Tibial artery (tissue), 4 donors: ENCODE measurements at regions of chr10 and their contacts with region 1.

Region 1: GRCh38 chr10:97731346-97732051 is 5.4 kb upstream of the ZFYVE27 start:
- DNase-seq: peak; percentile 72 to 84
- H3K4me3 ChIP-seq: no peak overlapping the region
- H3K27ac ChIP-seq: peak overlapping the region in 1 of 2 donors; percentile 7
- H3K4me1 ChIP-seq: peaks cover 0 to 16% (median 12%) of the 10 kb centered on the region in 4 donors
- H3K27me3 ChIP-seq: no peaks in the 10 kb centered on the region
- CTCF ChIP-seq: peak; percentile 81 to 95

Region 2: GRCh38 chr10:97407211-97407951 is 324.1 kb before region 1 on chr10:
- intact Hi-C with region 1: no loop called
- DNase-seq: no peak
- H3K4me3 ChIP-seq: no peak overlapping the region
- H3K27ac ChIP-seq: no peak overlapping the region
- H3K4me1 ChIP-seq: peaks cover 0 to 8% (median 5%) of the 10 kb centered on the region in 4 donors
- H3K27me3 ChIP-seq: no peaks in the 10 kb centered on the region
- CTCF ChIP-seq: peak; percentile 69 to 85

Region 3: DNA sequence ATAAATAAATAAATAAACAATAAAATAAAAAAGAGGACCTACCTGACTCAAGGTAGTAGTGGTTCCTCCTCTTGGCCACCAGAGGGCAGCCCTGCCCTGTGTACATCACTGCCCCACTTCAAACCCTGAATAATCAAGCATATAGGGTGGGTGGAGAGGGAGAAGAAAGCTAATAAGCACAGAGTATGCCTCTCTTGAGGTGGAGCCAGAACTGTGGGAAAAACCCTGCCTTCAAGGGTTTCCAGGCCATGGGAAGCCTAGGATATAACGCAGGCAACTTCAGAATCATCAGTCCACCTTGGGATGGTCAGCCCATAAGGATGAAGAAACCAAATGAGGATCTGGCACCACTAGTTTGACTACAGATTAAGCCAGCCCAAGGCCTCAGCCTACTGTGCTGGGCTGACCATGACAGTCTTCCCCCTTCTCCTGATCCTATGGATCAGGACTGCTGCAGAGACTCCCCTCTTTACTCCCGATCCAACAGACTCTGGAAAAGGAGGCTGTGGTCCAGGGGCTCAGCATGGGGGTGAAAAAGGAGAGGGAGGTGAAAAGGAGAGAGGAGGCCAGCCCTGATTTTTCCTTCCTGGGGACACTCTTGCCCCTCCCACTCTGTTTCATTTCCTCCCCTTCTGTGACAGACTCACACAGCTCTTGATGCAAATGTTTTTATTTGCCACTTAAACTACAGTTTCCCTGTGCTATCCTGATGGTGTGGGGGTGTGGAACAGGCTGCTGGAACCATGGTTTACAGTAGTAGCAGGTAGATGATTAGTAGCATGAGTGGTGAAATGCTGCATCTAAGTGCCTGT is 54.5 kb before region 1 on chr10:
- intact Hi-C with region 1: loop called (anchors 5 kb)
- DNase-seq: no peak
- H3K4me3 ChIP-seq: no peak overlapping the region
- H3K27ac ChIP-seq: peak overlapping the region in 1 of 2 donors; percentile 16
- H3K4me1 ChIP-seq: peaks cover 0 to 8% (median 2%) of the 10 kb centered on the region in 4 donors
- H3K27me3 ChIP-seq: no peaks in the 10 kb centered on the region
- CTCF ChIP-seq: peak; percentile 70 to 92

Region 4: GRCh38 chr10:97701438-97702069 is 29.9 kb before region 1 on chr10:
- intact Hi-C with region 1: loop called (anchors 5 kb)
- DNase-seq: peak in 1 of 2 donors; percentile 61
- H3K4me3 ChIP-seq: no peak overlapping the region
- H3K27ac ChIP-seq: no peak overlapping the region
- H3K4me1 ChIP-seq: peaks cover 0 to 11% (median 5%) of the 10 kb centered on the region in 4 donors
- H3K27me3 ChIP-seq: no peaks in the 10 kb centered on the region
- CTCF ChIP-seq: peak; percentile 86 to 91